Activated CD8-positive, alpha-beta T cell treated with anti-CD3 and anti-CD28 coated beads for 36 hours (primary cell): ENCODE measurements at regions of chr17 and their contacts with region 1.

Region 1: DNA sequence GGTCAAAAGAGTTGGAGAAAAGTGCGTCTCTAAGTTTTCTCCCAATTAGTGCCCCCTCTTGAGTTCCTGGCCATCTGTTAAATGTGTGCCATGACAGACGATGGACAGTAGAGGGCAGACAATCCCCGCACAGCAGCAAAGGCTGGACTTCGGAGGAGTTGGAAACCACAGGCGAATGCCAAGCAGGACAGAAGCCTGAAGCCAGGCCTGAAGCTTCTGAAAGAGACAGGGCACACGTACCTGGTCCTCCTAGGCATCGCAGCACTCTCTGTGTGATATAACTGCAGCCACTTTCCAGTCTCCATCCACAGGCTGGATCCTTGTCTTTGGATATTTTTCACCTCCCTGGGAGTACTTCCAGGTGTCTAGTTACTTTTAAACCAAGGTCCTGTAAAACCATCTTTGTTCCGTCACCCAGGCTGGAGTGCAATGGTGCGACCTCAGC is 14.5 kb downstream of the C17orf100 start:
- DNase-seq: peak; percentile 63
- ATAC-seq: peak; percentile 81
- H3K4me3 Mint-ChIP-seq: no peak overlapping the region
- H3K27ac Mint-ChIP-seq: no peak overlapping the region
- H3K4me1 Mint-ChIP-seq: peaks cover 20% of the 10 kb centered on the region
- H3K27me3 Mint-ChIP-seq: no peaks in the 10 kb centered on the region
- CTCF ChIP-seq: peak; percentile 93

Region 2: GRCh38 chr17:6677158-6677831 is 11.2 kb after region 1 on chr17:
- CTCF ChIA-PET with region 1: interaction called, 12 read pairs
- POLR2A ChIA-PET with region 1: interaction called, 3 read pairs
- intact Hi-C with region 1: no loop called
- DNase-seq: peak; percentile 42
- ATAC-seq: no peak
- H3K4me3 Mint-ChIP-seq: no peak overlapping the region
- H3K27ac Mint-ChIP-seq: no peak overlapping the region
- H3K4me1 Mint-ChIP-seq: peaks cover 7% of the 10 kb centered on the region
- H3K27me3 Mint-ChIP-seq: peaks cover 26% of the 10 kb centered on the region
- CTCF ChIP-seq: no peak

Region 3: DNA sequence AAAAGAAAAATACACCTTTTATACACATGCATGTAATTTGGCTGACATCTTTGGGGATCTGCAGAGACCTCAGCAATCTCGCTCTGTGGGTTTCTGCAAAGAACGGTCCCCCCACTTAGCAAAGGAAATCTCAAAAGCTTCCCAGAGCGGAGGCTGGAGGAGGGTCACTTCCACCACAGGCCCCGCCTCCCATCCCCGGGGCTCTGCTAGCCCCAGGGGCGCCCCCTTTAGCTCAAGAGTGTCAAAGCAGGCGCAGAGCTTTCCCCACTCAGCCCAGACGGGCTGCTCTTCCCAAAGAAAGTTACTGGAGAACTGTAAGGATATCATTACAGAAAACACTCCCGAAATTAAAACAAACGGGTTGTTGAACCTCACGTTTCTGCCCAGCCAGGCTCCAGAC is 35.6 kb after region 1 on chr17:
- CTCF ChIA-PET with region 1: interaction called, 14 read pairs
- POLR2A ChIA-PET with region 1: no interaction called
- intact Hi-C with region 1: no loop called
- DNase-seq: peak; percentile 68
- ATAC-seq: peak; percentile 92
- H3K4me3 Mint-ChIP-seq: no peak overlapping the region
- H3K27ac Mint-ChIP-seq: no peak overlapping the region
- H3K4me1 Mint-ChIP-seq: peaks cover 2% of the 10 kb centered on the region
- H3K27me3 Mint-ChIP-seq: no peaks in the 10 kb centered on the region
- CTCF ChIP-seq: peak; percentile 68

Region 4: GRCh38 chr17:6748617-6749016 is 82.5 kb after region 1 on chr17:
- CTCF ChIA-PET with region 1: no interaction called
- POLR2A ChIA-PET with region 1: no interaction called
- intact Hi-C with region 1: no loop called
- DNase-seq: no peak
- ATAC-seq: no peak
- H3K4me3 Mint-ChIP-seq: no peak overlapping the region
- H3K27ac Mint-ChIP-seq: no peak overlapping the region
- H3K4me1 Mint-ChIP-seq: peaks cover 16% of the 10 kb centered on the region
- H3K27me3 Mint-ChIP-seq: peaks cover 11% of the 10 kb centered on the region
- CTCF ChIP-seq: no peak